GM12878 (cell line): ENCODE measurements at regions of chr7 and their contacts with region 1.

Region 1: GRCh38 chr7:44980393-44981034 is 1.7 kb upstream of the MYO1G start:
- DNase-seq: peak; percentile 97
- ATAC-seq: peak; percentile 57
- H3K4me3 ChIP-seq: peak overlapping the region; percentile 100
- H3K27ac ChIP-seq: peak overlapping the region; percentile 96
- H3K4me1 ChIP-seq: peaks cover 57% of the 10 kb centered on the region
- H3K27me3 ChIP-seq: no peaks in the 10 kb centered on the region
- CTCF ChIP-seq: no peak
- EP300 ChIP-seq: peak; percentile 61 to 81; a peak in 2 of 4 replicates
- POLR2A ChIP-seq: no peak; the same call in 1 of the 2 replicates
- RAD21 ChIP-seq: no peak

Region 2: GRCh38 chr7:44257618-44258422 is 722.7 kb before region 1 on chr7:
- CTCF ChIA-PET with region 1: no interaction called
- POLR2A ChIA-PET with region 1: no interaction called
- RAD21 ChIA-PET with region 1: no interaction called
- SMC1A ChIA-PET with region 1: no interaction called
- in situ Hi-C with region 1: no loop called
- intact Hi-C with region 1: no loop called
- DNase-seq: peak; percentile 89
- ATAC-seq: peak; percentile 97
- H3K4me3 ChIP-seq: no peak overlapping the region
- H3K27ac ChIP-seq: peak overlapping the region; percentile 94
- H3K4me1 ChIP-seq: peaks cover 28% of the 10 kb centered on the region
- H3K27me3 ChIP-seq: no peaks in the 10 kb centered on the region
- CTCF ChIP-seq: peak in 1 of 3 experiments; percentile 14; a peak in 1 of 6 replicates
- EP300 ChIP-seq: peak; percentile 69 to 93
- POLR2A ChIP-seq: peak; percentile 59; the same call in 1 of the 2 replicates
- RAD21 ChIP-seq: peak; percentile 19; the same call in 1 of the 2 replicates

Region 3: DNA sequence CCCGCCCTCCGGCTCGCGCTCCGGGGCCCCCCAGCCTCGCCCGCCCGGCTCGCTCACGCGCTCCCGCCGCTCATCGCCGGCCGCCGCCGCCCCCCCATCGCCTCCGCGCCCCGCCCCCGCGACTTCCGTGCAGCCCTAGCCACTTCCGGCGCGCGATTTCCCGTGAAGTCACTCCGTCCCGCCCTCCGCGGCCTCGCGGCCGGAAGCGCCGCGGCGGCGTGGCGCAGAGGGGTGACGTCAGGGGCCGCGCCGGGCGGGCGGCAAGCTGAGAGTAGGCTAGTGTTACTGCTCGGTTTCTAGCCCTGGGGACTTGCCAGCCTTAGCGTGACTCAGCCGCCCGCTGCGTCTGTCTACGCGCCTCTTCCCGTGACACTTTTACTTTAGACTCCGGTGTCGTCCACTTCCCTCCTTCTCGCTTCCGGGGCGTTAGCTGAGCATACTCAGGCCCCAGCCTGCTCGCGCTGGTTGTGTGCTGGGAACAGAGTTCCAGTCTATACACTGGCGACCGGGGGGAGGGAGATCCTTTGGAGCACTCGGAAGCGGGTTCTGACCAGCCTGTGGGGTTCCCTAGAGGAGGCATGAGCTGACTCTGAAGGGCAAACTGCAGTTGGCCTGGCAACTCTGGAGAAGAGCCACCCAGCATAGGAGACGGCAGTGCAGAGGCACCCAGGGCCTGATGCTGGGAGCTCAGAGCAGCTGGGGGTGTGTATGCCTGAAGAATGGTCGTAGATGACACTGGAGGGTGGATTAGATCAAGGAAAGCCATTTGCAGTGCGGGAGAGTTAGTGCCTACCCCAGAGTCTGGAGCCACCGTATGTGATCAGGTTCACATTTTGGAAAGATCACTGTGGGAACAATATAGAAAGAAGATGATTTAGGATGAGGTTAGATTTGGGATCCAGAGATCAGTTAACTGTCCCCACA is 94.9 kb before region 1 on chr7 and contains the start of gene PURB:
- CTCF ChIA-PET with region 1: interaction called, 3 read pairs
- POLR2A ChIA-PET with region 1: interaction called, 6 read pairs
- RAD21 ChIA-PET with region 1: interaction called, 7 read pairs
- SMC1A ChIA-PET with region 1: interaction called, 7 read pairs
- in situ Hi-C with region 1: no loop called
- intact Hi-C with region 1: loop called (anchors 5 kb)
- DNase-seq: peak; percentile 79
- ATAC-seq: peak; percentile 88
- H3K4me3 ChIP-seq: peak within 1 kb of the TSS; percentile 99
- H3K27ac ChIP-seq: peak within 1 kb of the TSS; percentile 99
- H3K4me1 ChIP-seq: 0 out of 2 replicates have a peak, but pooled peaks cover 3% of the 10 kb centered on the region
- H3K27me3 ChIP-seq: no peaks in the 10 kb centered on the region
- CTCF ChIP-seq: no peak; a peak in 1 of 6 replicates
- EP300 ChIP-seq: peak; percentile 62 to 64; a peak in 3 of 4 replicates
- POLR2A ChIP-seq: peak; percentile 91
- RAD21 ChIP-seq: no peak
- polyA plus RNA-seq, gene PURB: 2.5 to 2.8 TPM

Region 4: GRCh38 chr7:45021604-45022296 is 41.2 kb after region 1 on chr7:
- CTCF ChIA-PET with region 1: interaction called, 8 read pairs
- POLR2A ChIA-PET with region 1: interaction called, 31 read pairs
- RAD21 ChIA-PET with region 1: interaction called, 11 read pairs
- SMC1A ChIA-PET with region 1: interaction called, 16 read pairs
- in situ Hi-C with region 1: no loop called
- intact Hi-C with region 1: loop called (anchors 2 kb)
- DNase-seq: peak; percentile 45
- ATAC-seq: peak; percentile 87
- H3K4me3 ChIP-seq: no peak overlapping the region
- H3K27ac ChIP-seq: peak overlapping the region; percentile 30
- H3K4me1 ChIP-seq: peaks cover 19% of the 10 kb centered on the region
- H3K27me3 ChIP-seq: no peaks in the 10 kb centered on the region
- CTCF ChIP-seq: no peak
- EP300 ChIP-seq: peak; percentile 56 to 68; a peak in 2 of 4 replicates
- POLR2A ChIP-seq: no peak
- RAD21 ChIP-seq: no peak

Region 5: GRCh38 chr7:45026984-45027773 is 46.7 kb after region 1 on chr7:
- CTCF ChIA-PET with region 1: interaction called, 8 read pairs
- POLR2A ChIA-PET with region 1: interaction called, 31 read pairs
- RAD21 ChIA-PET with region 1: interaction called, 17 read pairs
- SMC1A ChIA-PET with region 1: interaction called, 16 read pairs
- in situ Hi-C with region 1: no loop called
- intact Hi-C with region 1: loop called (anchors 2 kb)
- DNase-seq: peak; percentile 40
- ATAC-seq: peak; percentile 71
- H3K4me3 ChIP-seq: peak overlapping the region; percentile 58
- H3K27ac ChIP-seq: peak overlapping the region; percentile 98
- H3K4me1 ChIP-seq: peaks cover 33% of the 10 kb centered on the region
- H3K27me3 ChIP-seq: no peaks in the 10 kb centered on the region
- CTCF ChIP-seq: no peak
- EP300 ChIP-seq: no peak
- POLR2A ChIP-seq: no peak
- RAD21 ChIP-seq: no peak

Region 6: GRCh38 chr7:45111298-45112223 is 131.0 kb after region 1 on chr7 and contains the start of gene TBRG4:
- CTCF ChIA-PET with region 1: interaction called, 39 read pairs
- POLR2A ChIA-PET with region 1: interaction called, 9 read pairs
- RAD21 ChIA-PET with region 1: interaction called, 3 read pairs
- SMC1A ChIA-PET with region 1: interaction called, 61 read pairs
- in situ Hi-C with region 1: no loop called
- intact Hi-C with region 1: loop called (anchors 1 kb)
- DNase-seq: peak; percentile 85
- ATAC-seq: peak; percentile 94
- H3K4me3 ChIP-seq: peak within 1 kb of the TSS; percentile 90
- H3K27ac ChIP-seq: peak within 1 kb of the TSS; percentile 83
- H3K4me1 ChIP-seq: peaks cover 7% of the 10 kb centered on the region
- H3K27me3 ChIP-seq: no peaks in the 10 kb centered on the region
- CTCF ChIP-seq: peak; percentile 11 to 22 (median 16); a peak in 4 of 6 replicates
- EP300 ChIP-seq: peak; percentile 12 to 57; a peak in 2 of 4 replicates
- POLR2A ChIP-seq: peak; percentile 100
- RAD21 ChIP-seq: no peak
- polyA plus RNA-seq, gene TBRG4: 8.4 to 13.3 TPM